ENCODE measurements at regions of chr2 and their contacts with region 1.

Region 1: GRCh38 chr2:165815299-165816141 is 21.5 kb upstream of the GALNT3 start:
- DNase-seq: peak; percentile 29
- H3K4me3 ChIP-seq: peak overlapping the region; percentile 28
- H3K27ac ChIP-seq: peak overlapping the region; percentile 70
- H3K4me1 ChIP-seq: peaks cover 47% of the 10 kb centered on the region
- CTCF ChIP-seq: no peak

Region 2: DNA sequence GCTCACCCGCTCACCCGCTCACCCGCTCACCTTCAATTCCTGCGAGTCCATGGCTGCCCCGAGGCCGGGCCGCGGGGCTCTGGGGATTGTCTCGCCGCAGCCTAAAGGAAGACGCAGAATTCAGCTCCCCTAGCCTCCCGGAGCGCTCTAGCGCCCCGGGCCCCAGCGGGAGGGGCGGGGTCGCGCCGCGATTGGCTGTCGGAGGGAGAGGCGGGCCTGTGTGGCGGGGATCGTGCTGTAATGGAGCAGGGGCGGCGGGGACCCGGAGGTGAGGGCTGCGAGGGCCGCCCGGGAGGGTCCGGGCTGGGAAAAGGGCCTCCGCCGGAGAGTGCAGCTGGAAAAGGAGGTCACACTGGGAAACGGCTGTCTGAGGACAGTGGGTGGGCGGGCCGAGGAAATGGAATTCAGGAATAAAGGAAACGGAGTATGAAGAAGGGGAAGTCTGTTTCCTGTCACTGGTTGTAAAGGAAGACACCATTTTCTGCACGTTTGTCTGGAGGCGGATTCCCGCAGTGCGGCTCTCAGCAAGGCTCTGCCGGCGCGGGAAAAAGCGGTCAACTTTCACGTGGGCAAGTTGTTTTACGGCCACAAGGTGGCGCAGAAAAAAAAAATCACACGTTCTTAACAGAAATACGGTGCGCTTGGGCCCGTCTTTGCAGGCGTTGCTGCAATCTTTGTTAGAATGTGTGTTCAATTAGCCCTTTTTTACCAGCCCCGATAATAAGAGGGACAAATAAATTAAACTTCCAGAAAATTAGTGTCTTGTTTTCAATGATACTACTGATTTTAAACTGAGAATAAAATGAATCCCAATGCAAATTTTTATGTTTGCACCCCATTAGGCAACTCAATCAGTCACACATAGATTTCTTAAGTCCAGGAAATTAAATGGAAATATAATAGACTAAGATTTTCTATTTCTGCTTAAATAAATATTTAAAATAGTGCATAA is 138.4 kb after region 1 on chr2 and contains the start of gene TTC21B:
- CTCF ChIA-PET with region 1: no interaction called
- POLR2A ChIA-PET with region 1: no interaction called
- intact Hi-C with region 1: loop called (anchors 5 kb)
- DNase-seq: peak; percentile 95
- H3K4me3 ChIP-seq: peak within 1 kb of the TSS; percentile 81
- H3K27ac ChIP-seq: peak within 1 kb of the TSS; percentile 55
- H3K4me1 ChIP-seq: peaks cover 23% of the 10 kb centered on the region
- CTCF ChIP-seq: peak; percentile 87
- total RNA-seq, gene TTC21B: 29.8 and 32.6 TPM in 2 replicates

Measured in OCI-LY7 (cell line).